OCI-LY7 (cell line): ENCODE measurements at regions of chr5 and their contacts with region 1.

Region 1: GRCh38 chr5:134041570-134042411 is 37.0 kb upstream of the VDAC1 start:
- DNase-seq: no peak
- H3K4me3 ChIP-seq: no peak overlapping the region
- H3K27ac ChIP-seq: no peak overlapping the region
- H3K4me1 ChIP-seq: no peaks in the 10 kb centered on the region
- CTCF ChIP-seq: no peak

Region 2: DNA sequence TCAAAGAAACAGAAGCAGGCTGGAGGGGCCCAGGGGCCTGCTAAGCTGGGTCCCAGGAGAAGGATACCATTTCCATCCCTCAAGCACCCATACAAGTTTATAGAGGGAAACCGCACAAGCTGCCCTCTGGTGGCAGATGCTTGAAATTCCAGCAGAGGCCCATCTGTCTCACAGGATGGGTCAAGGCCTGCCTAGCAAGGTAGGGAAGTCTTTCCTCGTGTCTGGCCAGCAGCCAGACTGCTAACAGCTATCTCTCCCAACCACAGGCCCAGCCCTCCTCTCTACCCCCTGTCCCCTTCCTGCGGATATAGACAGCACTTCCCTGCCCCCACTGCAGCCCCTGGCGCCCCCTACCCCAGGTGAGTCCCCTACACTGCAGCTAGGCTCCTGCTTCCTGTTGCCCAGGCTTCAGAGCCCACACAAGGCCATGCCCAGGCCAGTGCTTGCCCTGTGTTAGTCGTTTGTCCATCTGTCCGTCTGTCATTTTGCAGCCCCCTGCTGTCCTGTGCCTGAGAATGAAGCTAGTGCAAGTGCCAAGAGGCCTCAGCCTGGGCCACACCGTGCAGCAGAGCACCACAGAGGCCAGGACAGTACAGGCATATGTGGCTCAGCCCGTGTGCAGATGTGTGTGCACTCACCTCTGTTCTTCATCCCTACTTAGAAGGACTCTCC is 98.9 kb after region 1 on chr5:
- CTCF ChIA-PET with region 1: interaction called, 18 read pairs
- POLR2A ChIA-PET with region 1: no interaction called
- intact Hi-C with region 1: loop called (anchors 1 kb)
- DNase-seq: peak; percentile 76
- H3K4me3 ChIP-seq: no peak overlapping the region
- H3K27ac ChIP-seq: no peak overlapping the region
- H3K4me1 ChIP-seq: peaks cover 15% of the 10 kb centered on the region
- CTCF ChIP-seq: peak; percentile 86